Pancreas (tissue), 10 donors: ENCODE measurements at regions of chr1 and their contacts with region 1.

Region 1: DNA sequence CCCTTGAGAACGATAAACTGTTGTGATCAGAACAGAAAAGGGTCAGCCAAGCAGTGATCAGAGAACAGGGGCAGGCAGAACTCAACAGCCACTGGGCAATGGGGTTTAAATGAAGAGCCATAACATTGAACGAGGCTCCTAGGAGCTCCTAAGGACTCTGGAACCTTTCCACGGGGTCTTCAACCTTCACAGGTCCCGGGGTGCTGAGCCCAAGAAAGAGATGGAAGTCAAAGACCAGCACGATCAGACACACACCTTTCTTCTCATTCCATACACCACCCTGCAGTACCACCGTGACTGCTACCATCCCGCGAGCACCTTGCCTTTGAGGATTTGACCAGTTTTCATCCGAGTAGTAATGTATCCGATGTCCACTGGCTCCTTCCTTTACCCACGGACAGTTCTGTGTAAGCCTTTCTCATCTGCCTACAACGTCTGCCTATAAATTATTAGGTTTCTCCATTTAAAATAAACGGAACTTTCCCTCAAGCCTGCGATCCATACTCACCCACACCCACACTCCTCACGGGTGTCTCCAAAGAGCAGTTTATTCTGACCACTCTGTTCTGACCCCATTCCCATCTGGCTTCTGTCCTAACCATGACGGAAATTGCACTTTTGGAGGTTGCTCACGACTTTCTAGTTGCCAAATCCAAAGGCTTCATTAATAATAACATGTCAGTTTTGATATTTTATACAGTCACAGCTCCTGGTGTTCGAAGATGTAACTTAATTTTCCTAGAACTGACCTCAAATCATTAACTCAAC is 16.8 kb upstream of the HHAT start:
- DNase-seq: no peak
- ATAC-seq: peak in 3 of 4 donors; percentile 15 to 40 (median 17)
- H3K4me3 ChIP-seq: peak overlapping the region in 1 of 4 donors; percentile 39
- H3K27ac ChIP-seq: no peak overlapping the region
- H3K4me1 ChIP-seq: no peaks in the 10 kb centered on the region
- H3K27me3 ChIP-seq: no peaks in the 10 kb centered on the region
- CTCF ChIP-seq: no peak

Region 2: DNA sequence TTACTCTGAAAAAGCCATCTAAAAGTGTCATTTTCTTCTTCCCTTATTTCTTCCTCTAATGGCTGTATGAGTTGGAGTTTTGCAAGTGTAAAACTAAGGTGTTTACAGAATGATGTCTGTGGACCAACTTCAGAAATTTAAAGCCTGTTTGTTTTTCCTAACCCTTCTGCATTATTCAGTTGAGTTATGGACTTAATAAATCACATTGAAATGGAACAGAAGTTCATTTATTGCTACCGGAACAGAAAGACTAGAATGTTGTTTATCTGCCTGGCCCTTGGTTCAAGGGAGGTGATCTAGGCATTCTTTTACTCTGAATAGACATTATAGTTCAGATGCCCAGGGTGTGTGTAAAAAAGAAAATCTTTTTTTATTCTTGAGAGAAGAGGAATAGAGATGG is 349.1 kb before region 1 on chr1:
- intact Hi-C with region 1: no loop called
- DNase-seq: no peak
- ATAC-seq: no peak
- H3K4me3 ChIP-seq: no peak overlapping the region
- H3K27ac ChIP-seq: no peak overlapping the region
- H3K4me1 ChIP-seq: no peaks in the 10 kb centered on the region
- H3K27me3 ChIP-seq: no peaks in the 10 kb centered on the region
- CTCF ChIP-seq: no peak

Region 3: DNA sequence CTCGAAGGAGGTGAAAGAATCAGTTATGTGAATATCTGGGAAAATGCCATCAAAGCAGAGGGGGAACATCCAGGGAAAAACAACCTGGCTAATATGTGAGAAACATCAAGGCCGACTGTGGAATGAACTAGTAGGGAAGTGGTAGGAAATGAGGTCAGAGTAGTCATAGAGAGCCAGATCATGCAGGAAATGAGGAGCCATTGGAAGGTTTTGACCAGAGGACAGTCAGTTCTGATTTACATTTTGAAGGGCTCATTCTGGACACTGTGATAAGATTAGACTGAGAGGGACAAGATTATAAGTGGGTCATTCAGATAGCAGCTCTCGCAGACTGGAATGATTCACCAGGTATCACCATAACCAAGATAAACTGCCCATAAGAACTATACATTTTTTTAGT is 310.2 kb before region 1 on chr1:
- intact Hi-C with region 1: no loop called
- DNase-seq: no peak
- ATAC-seq: no peak
- H3K4me3 ChIP-seq: no peak overlapping the region
- H3K27ac ChIP-seq: no peak overlapping the region
- H3K4me1 ChIP-seq: no peaks in the 10 kb centered on the region
- H3K27me3 ChIP-seq: no peaks in the 10 kb centered on the region
- CTCF ChIP-seq: no peak

Region 4: GRCh38 chr1:210143465-210144062 is 168.3 kb before region 1 on chr1:
- intact Hi-C with region 1: loop called (anchors 5 kb)
- DNase-seq: peak in 5 of 6 donors; percentile 31 to 86 (median 55)
- ATAC-seq: peak in 3 of 4 donors; percentile 54 to 74 (median 65)
- H3K4me3 ChIP-seq: no peak overlapping the region
- H3K27ac ChIP-seq: no peak overlapping the region
- H3K4me1 ChIP-seq: no peaks in the 10 kb centered on the region
- H3K27me3 ChIP-seq: peaks cover 0 to 7% (median 0%) of the 10 kb centered on the region in 4 donors
- CTCF ChIP-seq: peak; percentile 6 to 56 (median 43)